Caco-2 (cell line): ENCODE measurements at regions of chr5 and their contacts with region 1.

Region 1: GRCh38 chr5:16521521-16522483 is 56.2 kb upstream of the ZNF622 start:
- DNase-seq: peak; percentile 82 to 84
- H3K4me3 ChIP-seq: 0 out of 2 replicates have a peak overlapping the region, but pooled peaks have one; percentile 6
- H3K4me3 Mint-ChIP-seq: peak overlapping the region; percentile 59
- H3K27ac Mint-ChIP-seq: peak overlapping the region; percentile 92
- H3K4me1 ChIP-seq: peaks cover 42% of the 10 kb centered on the region
- H3K4me1 Mint-ChIP-seq: peaks cover 45% of the 10 kb centered on the region
- H3K27me3 ChIP-seq: no peaks in the 10 kb centered on the region
- H3K27me3 Mint-ChIP-seq: no peaks in the 10 kb centered on the region
- CTCF ChIP-seq: no peak

Region 2: DNA sequence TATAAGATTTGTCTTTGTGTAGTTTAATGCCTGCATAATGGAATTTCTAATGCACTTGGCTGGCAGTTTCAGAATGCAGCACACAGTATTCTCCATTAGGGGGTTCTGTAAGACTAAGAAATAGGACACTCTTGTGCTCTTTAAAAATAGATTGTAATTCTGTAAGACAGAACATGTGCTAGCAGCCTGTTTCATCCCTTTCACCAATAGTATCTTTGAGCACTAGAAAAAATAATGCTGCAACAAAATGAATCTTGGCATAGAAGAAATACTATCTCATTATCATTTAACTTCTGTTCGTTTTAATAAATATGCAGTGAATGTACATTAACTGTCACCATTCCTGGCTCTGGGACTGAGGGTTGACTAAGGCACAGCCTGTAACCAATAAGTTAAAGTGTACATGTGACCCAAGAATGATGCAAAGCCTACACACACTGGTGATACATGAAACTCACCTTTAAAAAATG is 32.4 kb before region 1 on chr5:
- CTCF ChIA-PET with region 1: interaction called, 6 read pairs
- POLR2A ChIA-PET with region 1: no interaction called
- intact Hi-C with region 1: loop called (anchors 1 kb)
- DNase-seq: peak in 1 of 2 experiments; percentile 48
- H3K4me3 ChIP-seq: no peak overlapping the region
- H3K4me3 Mint-ChIP-seq: no peak overlapping the region
- H3K27ac Mint-ChIP-seq: peak overlapping the region; percentile 54
- H3K4me1 ChIP-seq: peaks cover 52% of the 10 kb centered on the region
- H3K4me1 Mint-ChIP-seq: peaks cover 31% of the 10 kb centered on the region
- H3K27me3 ChIP-seq: no peaks in the 10 kb centered on the region
- H3K27me3 Mint-ChIP-seq: no peaks in the 10 kb centered on the region
- CTCF ChIP-seq: peak; percentile 75 to 79

Region 3: DNA sequence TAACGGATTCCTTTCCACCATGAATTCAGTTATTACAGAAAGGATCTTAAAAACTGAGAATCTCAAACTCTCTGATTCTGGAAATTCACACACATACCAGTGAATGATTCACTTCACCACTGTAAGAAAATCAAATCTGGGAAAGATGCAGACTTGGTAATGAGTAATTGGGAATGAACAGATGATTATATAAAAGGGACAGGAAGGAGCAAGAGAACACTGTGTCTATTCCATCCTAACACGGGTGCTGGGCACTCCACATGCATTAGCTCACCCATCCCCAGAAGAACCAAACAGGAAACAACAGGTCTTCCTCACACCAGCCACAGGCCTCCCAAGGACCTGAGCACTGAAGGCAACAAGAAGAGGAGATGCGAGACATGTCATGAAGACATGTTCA is 18.6 kb after region 1 on chr5:
- CTCF ChIA-PET with region 1: interaction called, 8 read pairs
- POLR2A ChIA-PET with region 1: interaction called, 6 read pairs
- intact Hi-C with region 1: loop called (anchors 1 kb)
- DNase-seq: no peak
- H3K4me3 ChIP-seq: no peak overlapping the region
- H3K4me3 Mint-ChIP-seq: no peak overlapping the region
- H3K27ac Mint-ChIP-seq: peak overlapping the region; percentile 16
- H3K4me1 ChIP-seq: peaks cover 52% of the 10 kb centered on the region
- H3K4me1 Mint-ChIP-seq: peaks cover 43% of the 10 kb centered on the region
- H3K27me3 ChIP-seq: no peaks in the 10 kb centered on the region
- H3K27me3 Mint-ChIP-seq: no peaks in the 10 kb centered on the region
- CTCF ChIP-seq: no peak

Region 4: DNA sequence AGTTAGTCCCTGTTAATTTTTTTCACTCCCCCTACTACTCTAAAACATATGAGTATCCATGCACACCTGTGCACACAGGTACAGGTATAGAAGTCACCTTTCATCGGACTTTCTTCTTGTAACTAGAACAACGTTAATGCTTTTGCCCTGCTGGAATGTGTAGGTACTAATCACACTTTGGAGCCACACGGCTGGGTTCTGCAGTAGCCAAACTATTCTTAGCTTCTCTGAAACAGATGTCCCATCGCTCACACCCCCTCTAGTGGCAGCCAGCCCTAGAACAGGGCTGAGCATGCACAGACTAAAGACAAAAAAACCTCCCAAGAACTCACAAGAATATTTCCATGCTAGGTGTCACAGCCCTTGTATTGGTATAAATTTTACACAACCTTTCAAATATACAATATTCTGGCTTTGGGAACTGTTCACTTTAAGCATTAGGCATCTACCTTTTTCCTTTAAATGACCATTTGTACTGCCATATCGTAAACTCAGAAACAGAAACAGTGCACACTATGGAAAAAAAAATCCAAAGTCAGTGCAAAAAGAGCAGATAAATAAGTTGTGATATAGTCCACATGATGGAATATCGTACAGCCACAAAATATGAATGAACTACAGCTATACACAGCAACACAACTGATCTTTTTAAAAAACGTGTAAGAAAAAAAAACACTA is 31.0 kb after region 1 on chr5:
- CTCF ChIA-PET with region 1: interaction called, 15 read pairs
- POLR2A ChIA-PET with region 1: no interaction called
- intact Hi-C with region 1: no loop called
- DNase-seq: peak; percentile 88 to 89
- H3K4me3 ChIP-seq: no peak overlapping the region
- H3K4me3 Mint-ChIP-seq: no peak overlapping the region
- H3K27ac Mint-ChIP-seq: peak overlapping the region; percentile 61
- H3K4me1 ChIP-seq: peaks cover 24% of the 10 kb centered on the region
- H3K4me1 Mint-ChIP-seq: peaks cover 24% of the 10 kb centered on the region
- H3K27me3 ChIP-seq: no peaks in the 10 kb centered on the region
- H3K27me3 Mint-ChIP-seq: no peaks in the 10 kb centered on the region
- CTCF ChIP-seq: peak; percentile 87 to 97

Region 5: DNA sequence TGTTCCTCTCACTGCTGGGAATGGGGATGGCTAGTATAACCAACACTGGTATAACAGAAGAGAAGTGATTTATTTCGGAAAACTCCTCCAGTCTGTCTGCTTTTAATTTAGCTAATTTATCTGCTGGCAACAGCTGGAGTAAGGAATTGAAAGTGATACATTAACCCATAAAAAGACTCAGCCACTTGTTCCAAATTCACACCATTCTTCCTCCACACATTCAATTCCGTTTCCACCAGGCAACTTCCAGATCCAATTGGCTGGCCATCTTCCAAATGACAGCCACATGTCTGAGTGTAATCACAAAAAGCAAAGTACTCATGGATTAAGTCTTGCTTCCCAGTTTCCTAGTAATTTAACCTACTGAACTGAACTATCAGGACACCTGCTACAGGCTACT is 172.1 kb after region 1 on chr5:
- CTCF ChIA-PET with region 1: no interaction called
- POLR2A ChIA-PET with region 1: no interaction called
- intact Hi-C with region 1: no loop called
- DNase-seq: no peak
- H3K4me3 ChIP-seq: no peak overlapping the region
- H3K4me3 Mint-ChIP-seq: no peak overlapping the region
- H3K27ac Mint-ChIP-seq: peak overlapping the region; percentile 13
- H3K4me1 ChIP-seq: no peaks in the 10 kb centered on the region
- H3K4me1 Mint-ChIP-seq: peaks cover 6% of the 10 kb centered on the region
- H3K27me3 ChIP-seq: no peaks in the 10 kb centered on the region
- H3K27me3 Mint-ChIP-seq: no peaks in the 10 kb centered on the region
- CTCF ChIP-seq: no peak

Region 6: DNA sequence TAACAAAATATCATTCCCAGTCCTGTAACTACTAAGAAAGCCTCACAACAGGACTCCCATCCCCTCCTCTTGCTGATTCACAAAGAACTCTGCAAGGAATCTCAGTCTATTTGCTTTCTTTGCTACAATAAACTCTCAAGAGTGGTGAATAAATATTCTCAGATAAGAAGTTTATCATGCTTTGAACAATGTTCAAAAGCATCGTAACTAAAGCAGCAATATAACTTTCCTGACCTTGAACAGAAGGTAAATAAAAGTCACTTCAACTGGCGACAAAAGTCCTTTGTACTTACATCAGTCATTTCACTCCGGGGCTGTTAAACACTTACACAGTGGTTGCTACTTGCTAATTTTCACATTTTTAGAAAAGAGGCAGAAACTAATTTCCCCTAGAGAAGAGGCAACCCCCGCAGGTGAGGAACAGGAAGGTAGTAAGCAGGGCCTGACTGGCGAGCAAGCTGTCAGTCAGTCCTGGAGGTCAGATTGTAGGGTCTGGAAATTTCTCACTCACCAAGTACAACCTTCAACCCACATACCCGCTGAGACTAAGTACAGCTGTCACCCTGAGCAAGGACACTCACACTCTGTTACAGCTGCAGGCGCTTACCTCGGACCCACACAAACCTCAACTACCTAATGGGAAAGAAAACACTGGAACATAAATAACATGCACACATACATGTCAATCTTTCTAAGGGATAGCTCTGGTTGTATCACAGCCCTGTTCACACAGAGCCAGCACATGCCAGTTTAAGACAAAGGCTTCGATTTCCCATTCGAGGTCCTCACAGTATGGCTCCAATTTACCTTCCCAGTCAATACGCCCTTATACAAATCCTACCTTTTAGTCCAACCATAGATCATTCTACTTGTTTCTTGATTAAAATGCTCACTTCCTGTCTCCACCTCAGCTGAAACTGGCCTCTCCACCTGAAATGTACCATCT is 199.6 kb after region 1 on chr5:
- CTCF ChIA-PET with region 1: no interaction called
- POLR2A ChIA-PET with region 1: no interaction called
- intact Hi-C with region 1: loop called (anchors 1 kb)
- DNase-seq: peak; percentile 69 to 73
- H3K4me3 ChIP-seq: no peak overlapping the region
- H3K4me3 Mint-ChIP-seq: peak overlapping the region; percentile 37
- H3K27ac Mint-ChIP-seq: peak overlapping the region; percentile 92
- H3K4me1 ChIP-seq: peaks cover 36% of the 10 kb centered on the region
- H3K4me1 Mint-ChIP-seq: peaks cover 20% of the 10 kb centered on the region
- H3K27me3 ChIP-seq: no peaks in the 10 kb centered on the region; the same call in 1 of the 2 replicates
- H3K27me3 Mint-ChIP-seq: no peaks in the 10 kb centered on the region
- CTCF ChIP-seq: no peak

Region 7: GRCh38 chr5:17305964-17306716 is 784.3 kb after region 1 on chr5:
- CTCF ChIA-PET with region 1: no interaction called
- POLR2A ChIA-PET with region 1: no interaction called
- intact Hi-C with region 1: loop called (anchors 1 kb)
- DNase-seq: peak; percentile 90 to 91
- H3K4me3 ChIP-seq: peak overlapping the region; percentile 2; the same call in 1 of the 2 replicates
- H3K4me3 Mint-ChIP-seq: peak overlapping the region; percentile 61
- H3K27ac Mint-ChIP-seq: peak overlapping the region; percentile 93
- H3K4me1 ChIP-seq: peaks cover 32% of the 10 kb centered on the region
- H3K4me1 Mint-ChIP-seq: peaks cover 35% of the 10 kb centered on the region
- H3K27me3 ChIP-seq: no peaks in the 10 kb centered on the region
- H3K27me3 Mint-ChIP-seq: no peaks in the 10 kb centered on the region
- CTCF ChIP-seq: no peak